Naive thymus-derived CD8-positive, alpha-beta T cell (primary cell): ENCODE measurements at regions of chr15 and their contacts with region 1.

Region 1: GRCh38 chr15:84658080-84658787 is at the start of gene NMB:
- DNase-seq: peak; percentile 74 to 91 (median 84)
- ATAC-seq: peak; percentile 72 to 73
- H3K4me3 Mint-ChIP-seq: peak within 1 kb of the TSS; percentile 64 to 88 (median 82)
- H3K27ac Mint-ChIP-seq: peak within 1 kb of the TSS; percentile 53 to 89 (median 75)
- H3K4me1 Mint-ChIP-seq: peaks cover 10 to 39% (median 32%) of the 10 kb centered on the region in 4 donors
- H3K27me3 Mint-ChIP-seq: no peaks in the 10 kb centered on the region
- polyA plus RNA-seq, gene NMB: 1.9 to 5.7 (median 3.3) TPM

Region 2: DNA sequence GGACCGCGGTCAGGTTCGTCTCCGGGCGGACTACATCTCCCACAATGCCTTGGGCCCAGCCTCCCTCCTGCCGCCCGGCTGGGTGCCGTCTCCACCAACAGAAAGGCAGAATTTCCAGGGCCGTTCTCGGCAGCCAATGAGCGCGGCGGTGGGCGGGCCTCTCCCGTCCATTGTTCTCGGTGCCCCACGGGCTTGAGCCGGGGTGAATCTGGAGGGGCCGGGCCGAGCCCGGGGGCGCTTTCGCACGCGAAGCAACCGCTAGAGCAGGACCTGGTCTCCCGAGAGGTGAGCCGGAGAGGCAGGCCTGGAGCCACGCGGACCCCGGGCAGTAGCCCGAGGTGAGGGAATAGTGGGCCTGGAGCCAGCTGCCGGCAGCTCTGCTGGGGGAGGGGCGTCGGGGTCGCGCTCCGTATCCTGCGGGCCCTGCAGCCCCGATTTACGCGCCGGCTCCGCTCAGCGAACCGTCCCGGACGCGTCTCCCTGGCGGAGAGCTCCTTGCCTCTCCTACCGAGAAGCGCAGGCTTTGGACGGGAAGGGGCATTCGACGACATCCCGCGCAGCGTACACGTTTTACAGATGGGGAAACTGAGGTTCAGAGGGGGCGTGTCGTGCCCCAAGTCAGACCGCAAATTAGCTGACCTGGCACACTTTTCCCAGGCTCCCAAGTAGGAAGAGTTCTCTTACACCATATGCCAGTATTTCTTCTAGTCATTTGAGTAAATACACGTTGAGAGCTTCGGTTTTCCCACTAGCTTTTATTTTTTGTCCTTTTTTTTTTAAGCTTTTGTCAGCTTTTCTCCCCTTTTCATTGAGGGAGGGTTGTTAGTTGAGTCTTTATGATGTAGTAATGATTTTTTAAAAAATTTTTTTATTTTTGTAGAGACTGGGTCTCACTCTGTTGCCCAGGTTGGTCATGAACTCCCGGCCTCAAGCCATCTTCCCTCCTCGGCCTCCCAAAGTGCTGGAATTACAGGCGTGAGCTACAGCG is 57.1 kb before region 1 on chr15 and contains the start of gene ZSCAN2:
- POLR2A ChIA-PET with region 1: interaction called, 16 read pairs
- DNase-seq: peak; percentile 88 to 94 (median 91)
- ATAC-seq: peak; percentile 95 to 96
- H3K4me3 Mint-ChIP-seq: peak within 1 kb of the TSS; percentile 92 to 99 (median 98)
- H3K27ac Mint-ChIP-seq: peak within 1 kb of the TSS; percentile 84 to 97 (median 94)
- H3K4me1 Mint-ChIP-seq: peaks cover 32 to 79% (median 74%) of the 10 kb centered on the region in 4 donors
- H3K27me3 Mint-ChIP-seq: no peaks in the 10 kb centered on the region
- polyA plus RNA-seq, gene ZSCAN2: 5.1 to 10.1 (median 7.4) TPM

Region 3: GRCh38 chr15:84633311-84634227 is 24.7 kb before region 1 on chr15:
- POLR2A ChIA-PET with region 1: interaction called, 127 read pairs
- DNase-seq: peak; percentile 45 to 80 (median 63)
- ATAC-seq: peak; percentile 58 to 61
- H3K4me3 Mint-ChIP-seq: peak overlapping the region; percentile 93 to 97 (median 96)
- H3K27ac Mint-ChIP-seq: peak overlapping the region; percentile 74 to 97 (median 95)
- H3K4me1 Mint-ChIP-seq: peaks cover 18 to 60% (median 54%) of the 10 kb centered on the region in 4 donors
- H3K27me3 Mint-ChIP-seq: no peaks in the 10 kb centered on the region

Region 4: GRCh38 chr15:84716036-84716799 is 58.0 kb after region 1 on chr15 and contains the start of gene SEC11A:
- POLR2A ChIA-PET with region 1: interaction called, 71 read pairs
- DNase-seq: peak; percentile 84 to 98 (median 88)
- ATAC-seq: peak; percentile 95
- H3K4me3 Mint-ChIP-seq: peak within 1 kb of the TSS; percentile 91 to 100 (median 94)
- H3K27ac Mint-ChIP-seq: peak within 1 kb of the TSS; percentile 94 to 100 (median 97)
- H3K4me1 Mint-ChIP-seq: peaks cover 18 to 73% (median 51%) of the 10 kb centered on the region in 4 donors
- H3K27me3 Mint-ChIP-seq: no peaks in the 10 kb centered on the region
- polyA plus RNA-seq, gene SEC11A: 103 to 128 (median 119) TPM

Region 5: GRCh38 chr15:84725001-84725491 is 66.8 kb after region 1 on chr15:
- POLR2A ChIA-PET with region 1: interaction called, 20 read pairs
- DNase-seq: peak in 2 of 10 donors; percentile 35 to 39
- ATAC-seq: peak; percentile 62 to 65
- H3K4me3 Mint-ChIP-seq: peak overlapping the region; percentile 62 to 84 (median 72)
- H3K27ac Mint-ChIP-seq: peak overlapping the region; percentile 81 to 96 (median 93)
- H3K4me1 Mint-ChIP-seq: peaks cover 27 to 73% (median 51%) of the 10 kb centered on the region in 4 donors
- H3K27me3 Mint-ChIP-seq: no peaks in the 10 kb centered on the region

Region 6: DNA sequence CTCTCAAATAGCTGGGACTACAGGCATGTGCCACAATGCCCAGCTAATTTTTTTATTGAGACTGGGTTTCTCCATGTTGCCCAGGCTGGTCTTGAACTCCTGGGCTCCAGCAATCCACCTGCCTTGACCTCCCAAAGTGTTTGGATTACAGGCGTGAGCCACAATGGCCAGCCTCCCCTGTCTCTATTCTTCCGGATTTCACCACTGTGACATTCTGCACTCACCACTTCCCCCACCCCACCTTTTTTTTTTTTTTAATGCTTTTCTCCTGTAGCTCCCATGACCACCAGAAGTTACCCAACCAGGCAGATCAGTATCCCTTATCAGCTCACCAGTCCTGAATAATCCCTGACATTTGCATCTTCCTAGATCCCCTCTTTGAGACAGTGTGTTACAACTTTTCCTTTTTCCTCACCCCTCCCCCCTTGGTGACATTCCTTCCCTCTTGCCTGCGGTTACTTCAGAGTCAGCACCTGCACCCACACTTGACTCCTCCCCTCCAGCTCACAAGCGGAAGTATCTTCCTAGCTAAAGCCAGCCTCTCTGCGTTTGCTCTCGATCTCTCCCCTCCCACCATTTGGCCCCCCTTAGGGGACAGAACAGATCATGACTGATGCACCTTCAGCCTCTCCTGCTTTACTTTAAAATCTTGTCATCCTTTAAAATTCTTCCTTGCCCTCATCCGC is 76.7 kb after region 1 on chr15:
- POLR2A ChIA-PET with region 1: interaction called, 10 read pairs
- DNase-seq: peak; percentile 29 to 86 (median 68)
- ATAC-seq: peak; percentile 88 to 89
- H3K4me3 Mint-ChIP-seq: peak overlapping the region; percentile 75 to 91 (median 84)
- H3K27ac Mint-ChIP-seq: peak overlapping the region; percentile 84 to 97 (median 93)
- H3K4me1 Mint-ChIP-seq: peaks cover 24 to 52% (median 45%) of the 10 kb centered on the region in 4 donors
- H3K27me3 Mint-ChIP-seq: no peaks in the 10 kb centered on the region

Region 7: DNA sequence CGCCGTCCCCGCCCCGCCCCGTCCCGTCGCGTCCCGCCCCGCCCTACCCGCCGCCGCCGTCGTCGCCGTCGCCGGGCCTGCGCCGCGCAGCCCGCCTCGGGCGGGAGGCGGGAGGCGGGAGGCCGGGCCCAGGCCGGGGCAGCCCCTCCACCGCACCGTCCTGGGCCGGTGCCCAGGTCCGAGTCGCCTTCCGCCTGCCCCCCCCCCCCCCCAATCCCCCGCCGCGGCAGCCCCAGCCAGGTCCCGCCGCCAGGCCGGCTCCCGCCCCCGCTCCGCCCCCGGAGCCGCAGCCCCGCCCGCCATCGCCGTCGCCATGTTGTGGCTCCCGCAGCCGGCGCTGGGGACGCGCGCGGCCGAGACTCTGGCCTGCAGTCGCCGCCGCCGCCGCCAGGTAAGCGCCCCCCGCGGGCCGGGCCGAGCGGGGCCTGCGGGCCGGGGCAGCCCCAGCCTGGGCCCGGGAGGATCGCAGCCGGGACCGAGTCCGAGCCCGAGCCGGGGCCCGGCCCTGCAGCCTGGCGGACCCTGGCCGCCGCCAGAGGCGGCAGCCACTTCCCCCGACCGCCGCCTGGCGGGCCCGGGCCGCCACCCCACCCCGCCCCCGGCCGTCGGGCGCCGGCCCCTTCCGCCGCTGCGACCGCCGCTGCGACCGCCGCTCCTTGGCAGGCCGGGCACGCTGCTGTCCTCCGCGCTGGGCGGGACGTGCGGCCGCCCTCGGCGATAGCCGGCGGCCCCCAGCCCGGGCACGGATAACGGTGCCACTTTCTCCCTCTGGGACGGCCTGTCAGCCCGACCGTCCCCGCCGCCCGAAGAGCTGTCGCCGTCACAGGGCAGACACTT is 90.3 kb after region 1 on chr15 and contains the start of gene ZNF592:
- POLR2A ChIA-PET with region 1: interaction called, 37 read pairs
- DNase-seq: peak; percentile 68 to 87 (median 82)
- ATAC-seq: peak; percentile 67 to 68
- H3K4me3 Mint-ChIP-seq: peak within 1 kb of the TSS; percentile 93 to 100 (median 98)
- H3K27ac Mint-ChIP-seq: peak within 1 kb of the TSS; percentile 98 to 100 (median 99)
- H3K4me1 Mint-ChIP-seq: peaks cover 49 to 74% (median 71%) of the 10 kb centered on the region in 4 donors
- H3K27me3 Mint-ChIP-seq: no peaks in the 10 kb centered on the region
- polyA plus RNA-seq, gene ZNF592: 3.2 to 9.4 (median 4.1) TPM

Region 8: DNA sequence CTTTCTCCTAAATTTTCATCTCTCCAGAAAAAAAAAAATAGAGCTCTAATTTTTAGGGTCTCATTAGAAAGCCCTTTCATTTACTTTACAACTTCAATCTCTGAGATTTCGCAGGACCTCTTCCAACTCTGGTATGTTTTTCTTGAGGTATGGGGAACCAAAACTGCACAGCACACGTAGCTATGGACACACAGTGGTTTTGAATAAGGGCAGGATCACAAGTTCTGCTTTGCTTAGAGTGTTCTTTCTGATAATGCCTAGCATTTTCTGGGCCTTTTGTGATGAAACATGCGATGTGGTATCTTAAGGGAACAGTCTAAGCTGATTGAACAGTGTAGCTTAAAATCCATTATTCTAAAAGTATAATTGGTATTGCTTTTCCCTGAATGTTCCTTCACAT is 115.5 kb after region 1 on chr15:
- POLR2A ChIA-PET with region 1: no interaction called
- DNase-seq: no peak
- ATAC-seq: no peak
- H3K4me3 Mint-ChIP-seq: no peak overlapping the region
- H3K27ac Mint-ChIP-seq: peak overlapping the region in 7 of 10 donors; percentile 0 to 81 (median 60)
- H3K4me1 Mint-ChIP-seq: peaks cover 34 to 62% (median 52%) of the 10 kb centered on the region in 4 donors
- H3K27me3 Mint-ChIP-seq: no peaks in the 10 kb centered on the region

Region 9: DNA sequence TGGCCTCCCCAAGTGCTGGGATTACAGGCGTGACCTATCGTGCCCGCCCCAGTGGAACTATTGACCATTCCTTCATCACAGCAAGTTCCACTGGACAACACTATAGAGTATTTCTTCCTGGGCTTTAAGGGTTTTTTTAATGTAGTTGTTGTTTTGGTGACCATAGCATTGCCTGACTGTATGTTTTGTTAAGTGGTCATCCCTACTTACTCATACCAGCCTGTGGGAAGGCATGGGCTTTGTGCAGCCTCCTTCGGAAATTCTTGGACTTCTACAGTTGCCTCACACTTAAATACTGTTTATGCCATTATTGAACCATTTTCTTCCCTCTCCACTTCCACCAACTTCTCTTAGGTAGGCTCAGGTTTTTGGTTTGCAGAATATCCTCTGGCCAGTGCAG is 139.0 kb after region 1 on chr15:
- POLR2A ChIA-PET with region 1: no interaction called
- DNase-seq: no peak
- ATAC-seq: no peak
- H3K4me3 Mint-ChIP-seq: no peak overlapping the region
- H3K27ac Mint-ChIP-seq: peak overlapping the region in 3 of 10 donors; percentile 15 to 67 (median 28)
- H3K4me1 Mint-ChIP-seq: peaks cover 0 to 3% (median 0%) of the 10 kb centered on the region in 4 donors
- H3K27me3 Mint-ChIP-seq: no peaks in the 10 kb centered on the region

Region 10: GRCh38 chr15:85036716-85037115 is 378.5 kb after region 1 on chr15:
- POLR2A ChIA-PET with region 1: no interaction called
- DNase-seq: no peak
- ATAC-seq: no peak
- H3K4me3 Mint-ChIP-seq: no peak overlapping the region
- H3K27ac Mint-ChIP-seq: peak overlapping the region in 2 of 10 donors; percentile 2 to 21
- H3K4me1 Mint-ChIP-seq: peaks cover 16 to 39% (median 23%) of the 10 kb centered on the region in 4 donors
- H3K27me3 Mint-ChIP-seq: no peaks in the 10 kb centered on the region